BJ (cell line): ENCODE measurements at regions of chr5 and their contacts with region 1.

Region 1: DNA sequence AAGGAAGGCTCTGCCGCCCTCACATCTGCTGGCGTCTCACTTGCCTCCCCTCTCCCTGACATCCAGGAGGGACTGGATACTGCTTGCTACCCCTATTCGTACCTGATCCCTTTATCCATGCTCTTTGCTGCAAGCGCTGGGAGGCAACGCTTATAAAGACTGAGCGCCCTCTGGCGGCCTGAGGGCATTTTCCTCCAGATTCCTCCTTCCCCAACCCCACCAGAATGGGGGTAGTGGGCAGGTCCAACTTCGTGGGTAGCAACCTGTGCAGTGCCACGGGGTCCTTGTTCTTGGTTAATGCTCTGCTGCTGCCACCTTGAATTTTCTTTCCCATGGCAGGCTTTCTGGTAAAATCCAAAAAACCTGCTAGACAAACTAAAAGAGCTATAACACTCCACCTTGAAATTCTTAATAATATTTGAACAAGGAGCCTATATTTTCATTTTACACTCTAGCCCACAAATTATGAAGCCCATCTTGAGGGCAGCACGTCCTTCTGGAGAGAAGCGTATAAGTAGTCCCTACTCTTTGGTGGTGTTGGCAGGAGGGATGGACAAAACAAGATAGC is 52.4 kb downstream of the JADE2 start:
- DNase-seq: no peak
- H3K4me3 ChIP-seq: no peak overlapping the region
- H3K27me3 ChIP-seq: no peaks in the 10 kb centered on the region
- CTCF ChIP-seq: peak; percentile 87

Region 2: GRCh38 chr5:134304311-134304710 is 273.6 kb before region 1 on chr5:
- CTCF ChIA-PET with region 1: interaction called, 53 read pairs
- POLR2A ChIA-PET with region 1: no interaction called
- DNase-seq: no peak
- H3K4me3 ChIP-seq: no peak overlapping the region
- H3K27me3 ChIP-seq: no peaks in the 10 kb centered on the region
- CTCF ChIP-seq: no peak

Region 3: DNA sequence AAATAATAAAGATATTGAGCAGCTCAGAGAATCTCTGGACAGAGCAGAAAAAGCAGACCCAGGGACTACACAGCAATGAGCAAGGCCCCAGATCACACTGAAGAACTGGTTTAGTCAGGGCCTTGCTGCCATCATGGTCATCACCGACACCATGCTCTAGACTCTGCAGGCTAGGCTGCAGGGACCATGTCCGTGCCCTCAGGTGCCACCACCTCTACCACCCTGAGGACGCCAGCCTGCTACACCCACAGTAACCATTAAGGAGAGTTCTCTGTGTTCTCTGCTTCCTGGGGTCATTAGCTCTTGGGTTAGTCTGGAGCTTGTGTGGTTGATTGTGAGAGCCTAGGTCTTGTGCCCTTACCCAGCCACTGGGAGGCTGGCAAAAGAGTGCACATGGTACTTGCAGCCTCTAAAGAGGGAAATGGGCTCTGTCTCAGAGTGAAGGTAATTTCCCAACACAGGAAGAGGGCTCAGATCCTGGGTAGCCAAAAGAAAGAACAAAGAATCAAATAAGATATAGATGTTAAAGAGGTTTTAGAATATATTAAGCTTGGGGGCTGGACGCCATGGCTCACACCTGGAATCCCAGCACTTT is 84.3 kb before region 1 on chr5:
- CTCF ChIA-PET with region 1: no interaction called
- POLR2A ChIA-PET with region 1: no interaction called
- DNase-seq: no peak
- H3K4me3 ChIP-seq: no peak overlapping the region
- H3K27me3 ChIP-seq: peaks cover 2% of the 10 kb centered on the region; the same call in 1 of the 2 replicates
- CTCF ChIP-seq: no peak

Region 4: DNA sequence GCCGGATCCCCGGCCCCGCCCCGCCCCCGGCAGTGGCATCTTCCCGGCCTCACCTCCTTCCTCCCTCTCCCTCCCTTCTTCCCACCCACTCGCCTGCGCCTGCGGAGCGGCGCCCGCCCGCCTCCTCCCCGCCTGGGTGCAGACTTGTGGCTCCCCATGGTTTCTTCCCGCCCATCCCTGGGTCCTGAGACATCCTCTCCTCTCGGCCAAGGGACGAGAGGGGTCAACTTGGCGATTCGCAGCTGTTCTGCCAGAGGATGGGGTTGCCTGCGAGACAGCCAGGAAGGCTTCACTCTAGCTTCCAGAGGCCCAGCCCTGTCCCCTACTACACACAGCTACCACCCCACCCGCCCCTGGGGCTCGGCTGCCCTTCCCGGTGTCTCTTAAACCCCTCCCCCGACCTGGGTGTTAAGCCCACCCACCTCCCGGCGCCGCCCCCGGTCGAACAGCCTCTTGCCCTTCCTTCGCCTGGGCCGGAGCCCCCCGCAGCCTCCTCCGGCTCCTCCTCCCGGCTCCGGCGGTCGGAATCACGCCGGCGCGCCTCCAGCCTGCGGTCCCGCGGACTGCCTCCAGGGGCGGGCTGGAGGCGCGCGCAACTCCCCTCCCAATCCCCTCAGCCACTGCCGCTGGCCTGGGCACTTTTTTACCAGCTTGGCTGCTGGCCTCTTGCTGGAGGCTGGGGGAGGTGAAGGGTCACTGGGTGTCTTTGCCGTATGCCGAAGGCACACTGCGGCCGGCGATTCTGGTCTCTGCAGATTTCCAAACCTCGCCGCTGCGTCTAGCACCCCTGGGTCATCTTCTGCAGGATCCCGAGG is 50.5 kb before region 1 on chr5:
- CTCF ChIA-PET with region 1: interaction called, 51 read pairs
- POLR2A ChIA-PET with region 1: no interaction called
- DNase-seq: peak; percentile 52
- H3K4me3 ChIP-seq: peak overlapping the region; percentile 84
- H3K27me3 ChIP-seq: no peaks in the 10 kb centered on the region
- CTCF ChIP-seq: peak; percentile 72

Region 5: DNA sequence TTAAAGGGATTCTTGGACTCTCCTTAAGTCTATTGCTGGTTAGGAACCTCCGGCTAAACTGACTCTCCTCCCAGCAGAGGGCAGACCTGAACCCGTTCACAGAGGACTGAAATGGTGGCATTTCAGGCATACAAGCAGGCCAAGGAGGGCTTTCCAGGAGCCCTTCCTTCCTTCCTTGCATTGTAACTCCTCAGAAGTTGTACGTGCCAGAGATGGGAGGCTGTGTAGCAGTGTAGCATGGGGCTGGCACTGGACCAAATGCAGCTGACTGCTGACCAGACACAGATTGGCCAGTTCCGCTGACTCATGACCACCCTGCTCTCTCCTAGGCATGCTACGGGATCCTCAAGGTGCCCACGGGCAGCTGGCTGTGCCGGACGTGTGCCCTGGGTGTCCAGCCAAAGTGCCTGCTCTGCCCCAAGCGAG is 16.0 kb before region 1 on chr5:
- CTCF ChIA-PET with region 1: interaction called, 21 read pairs
- POLR2A ChIA-PET with region 1: no interaction called
- DNase-seq: no peak
- H3K4me3 ChIP-seq: no peak overlapping the region
- H3K27me3 ChIP-seq: no peaks in the 10 kb centered on the region
- CTCF ChIP-seq: peak; percentile 67

Region 6: GRCh38 chr5:134592141-134592746 is 14.4 kb after region 1 on chr5:
- CTCF ChIA-PET with region 1: interaction called, 33 read pairs
- POLR2A ChIA-PET with region 1: no interaction called
- DNase-seq: no peak
- H3K4me3 ChIP-seq: no peak overlapping the region
- H3K27me3 ChIP-seq: no peaks in the 10 kb centered on the region
- CTCF ChIP-seq: no peak

Region 7: DNA sequence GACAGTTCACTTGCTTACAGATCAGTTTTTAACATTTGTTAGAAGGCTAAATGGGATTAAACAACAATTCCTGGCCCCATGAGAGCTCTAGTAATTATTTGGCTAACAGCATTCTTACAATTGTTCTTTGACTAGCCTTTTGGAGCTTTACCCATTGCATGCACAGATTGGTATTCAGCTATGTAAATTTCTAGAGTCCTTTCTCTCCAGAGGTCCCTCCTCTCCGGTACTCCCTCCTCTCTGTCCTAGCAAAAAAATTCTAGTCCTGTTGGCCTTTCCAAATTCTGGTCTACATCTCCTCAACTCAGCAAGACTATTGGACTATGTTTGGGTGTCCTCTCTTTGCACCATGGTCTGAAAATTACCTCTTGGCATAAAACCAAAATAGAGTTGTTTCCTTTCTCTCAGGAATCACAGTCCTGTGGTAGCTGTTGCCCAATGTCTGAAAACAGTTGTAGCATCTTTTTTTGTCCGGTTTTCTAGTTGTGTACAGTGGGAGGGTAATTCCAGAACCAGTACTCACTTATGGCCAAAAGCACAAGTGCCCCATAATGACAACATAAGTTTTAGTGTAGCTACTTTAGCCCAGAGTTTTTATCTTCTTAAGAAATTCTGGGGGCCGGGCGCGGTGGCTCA is 36.7 kb after region 1 on chr5:
- CTCF ChIA-PET with region 1: no interaction called
- POLR2A ChIA-PET with region 1: no interaction called
- DNase-seq: no peak
- H3K4me3 ChIP-seq: no peak overlapping the region
- H3K27me3 ChIP-seq: no peaks in the 10 kb centered on the region
- CTCF ChIP-seq: no peak